ENCODE measurements at regions of chr2 and their contacts with region 1.

Region 1: GRCh38 chr2:31877008-31877407 is 133.8 kb downstream of the MEMO1 start:
- DNase-seq: no peak
- H3K27ac ChIP-seq: no peak overlapping the region
- CTCF ChIP-seq: no peak

Region 2: GRCh38 chr2:31835450-31835849 is 41.6 kb before region 1 on chr2:
- CTCF ChIA-PET with region 1: no interaction called
- POLR2A ChIA-PET with region 1: interaction called, 11 read pairs
- DNase-seq: no peak
- H3K27ac ChIP-seq: no peak overlapping the region
- CTCF ChIP-seq: no peak

Measured in RWPE1 (cell line).